ENCODE measurements at regions of chr2 and their contacts with region 1.

Region 1: GRCh38 chr2:106886916-106887758 is 1.2 kb upstream of the ST6GAL2 start:
- DNase-seq: peak; percentile 70 to 87
- ATAC-seq: peak; percentile 58
- H3K4me3 ChIP-seq: peak overlapping the region; percentile 75 to 96
- H3K27ac ChIP-seq: peak overlapping the region; percentile 52 to 89
- H3K4me1 ChIP-seq: peaks cover 1 to 2% of the 10 kb centered on the region in 2 donors
- H3K27me3 ChIP-seq: no peaks in the 10 kb centered on the region

Region 2: DNA sequence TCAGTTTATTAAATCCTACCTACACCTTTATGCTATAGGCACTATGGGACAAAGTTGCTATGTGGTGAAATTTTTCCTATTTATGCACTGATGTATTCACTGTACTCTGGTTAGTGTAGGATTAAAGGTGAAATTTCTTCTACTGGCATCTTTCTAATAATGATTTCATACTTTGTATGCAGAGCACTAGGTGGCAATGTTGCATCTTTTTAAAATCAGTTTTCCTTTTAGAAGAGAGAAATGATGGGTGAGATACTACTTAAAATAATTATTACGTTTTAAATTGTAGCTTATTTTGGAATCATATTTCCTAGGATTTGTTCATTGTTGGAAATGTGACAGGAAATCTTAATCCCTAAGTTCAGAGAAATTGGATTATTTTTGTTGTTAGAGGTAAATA is 249.1 kb before region 1 on chr2:
- intact Hi-C with region 1: loop called (anchors 5 to 10 kb)
- DNase-seq: no peak
- ATAC-seq: no peak
- H3K4me3 ChIP-seq: no peak overlapping the region
- H3K27ac ChIP-seq: no peak overlapping the region
- H3K4me1 ChIP-seq: peaks cover 0 to 2% of the 10 kb centered on the region in 2 donors
- H3K27me3 ChIP-seq: no peaks in the 10 kb centered on the region

Region 3: GRCh38 chr2:106812383-106812782 is 74.8 kb before region 1 on chr2:
- intact Hi-C with region 1: loop called in 1 of 2 experiments (anchors 5 kb)
- DNase-seq: peak in 1 of 2 donors; percentile 63
- ATAC-seq: peak; percentile 76
- H3K4me3 ChIP-seq: no peak overlapping the region
- H3K27ac ChIP-seq: peak overlapping the region; percentile 65 to 78
- H3K4me1 ChIP-seq: peaks cover 4 to 13% of the 10 kb centered on the region in 2 donors
- H3K27me3 ChIP-seq: no peaks in the 10 kb centered on the region

Region 4: GRCh38 chr2:106851087-106851874 is 35.9 kb before region 1 on chr2:
- intact Hi-C with region 1: loop called in 1 of 2 experiments (anchors 5 kb)
- DNase-seq: no peak
- ATAC-seq: peak; percentile 70
- H3K4me3 ChIP-seq: peak overlapping the region in 1 of 2 donors; percentile 69
- H3K27ac ChIP-seq: peak overlapping the region; percentile 80 to 93
- H3K4me1 ChIP-seq: peaks cover 6 to 18% of the 10 kb centered on the region in 2 donors
- H3K27me3 ChIP-seq: no peaks in the 10 kb centered on the region

Region 5: DNA sequence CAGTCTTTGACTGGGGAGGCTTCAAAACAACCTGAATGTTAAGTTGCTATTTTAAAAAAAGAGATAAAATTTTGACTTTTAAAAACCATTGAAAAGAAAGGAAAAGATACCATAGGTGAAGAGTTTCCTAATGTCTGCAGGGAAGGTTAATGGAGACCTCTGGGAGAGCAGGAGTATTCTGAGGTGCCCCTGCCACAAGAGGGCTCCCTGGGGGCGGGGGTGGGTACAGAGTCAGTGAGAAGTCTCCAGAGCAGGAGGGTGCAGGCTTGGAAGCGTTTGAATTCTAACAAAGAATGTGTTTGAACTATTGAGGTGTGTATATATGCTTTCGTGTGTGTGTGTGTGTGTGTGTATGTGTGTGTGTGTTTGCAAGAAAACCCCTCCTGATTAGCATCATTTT is 45.5 kb after region 1 on chr2:
- intact Hi-C with region 1: no loop called
- DNase-seq: no peak
- ATAC-seq: no peak
- H3K4me3 ChIP-seq: no peak overlapping the region
- H3K27ac ChIP-seq: no peak overlapping the region
- H3K4me1 ChIP-seq: no peaks in the 10 kb centered on the region
- H3K27me3 ChIP-seq: no peaks in the 10 kb centered on the region

Region 6: DNA sequence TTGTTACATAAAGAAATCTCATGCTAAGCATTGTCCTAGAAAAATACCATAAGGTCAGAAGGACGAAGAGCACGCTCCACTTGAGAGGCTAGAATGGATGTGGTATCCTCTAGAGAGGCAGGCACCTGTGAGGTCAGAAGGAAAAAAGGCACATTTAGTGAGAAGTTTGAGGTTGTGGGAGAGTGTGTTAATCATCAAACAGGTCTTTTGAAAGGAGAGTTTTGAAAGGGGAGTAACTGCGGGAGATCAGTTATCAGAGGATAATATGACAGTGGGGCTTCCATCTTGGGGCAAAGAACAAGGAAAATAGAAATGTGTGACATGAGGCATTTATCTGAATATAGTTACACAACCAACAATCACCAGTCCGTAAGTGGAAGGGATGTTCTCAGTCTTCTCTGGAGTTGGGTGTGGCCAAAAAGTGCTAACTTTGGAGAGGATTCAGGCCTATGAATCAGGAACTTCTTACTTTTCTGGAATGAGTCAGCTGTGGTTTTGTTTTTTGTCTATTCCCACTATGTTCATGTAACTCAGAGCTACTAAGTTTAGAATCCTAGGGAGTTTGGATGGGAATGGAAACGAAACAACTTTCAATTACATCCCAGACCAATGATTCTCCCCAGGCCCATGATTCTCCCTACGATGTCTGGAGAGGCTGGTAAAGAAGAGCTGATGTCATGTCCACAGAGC is 450.2 kb after region 1 on chr2:
- intact Hi-C with region 1: loop called in 1 of 2 experiments (anchors 10 kb)
- DNase-seq: no peak
- ATAC-seq: peak; percentile 84
- H3K4me3 ChIP-seq: no peak overlapping the region
- H3K27ac ChIP-seq: peak overlapping the region in 1 of 2 donors; percentile 84
- H3K4me1 ChIP-seq: peaks cover 3% of the 10 kb centered on the region in 2 donors
- H3K27me3 ChIP-seq: no peaks in the 10 kb centered on the region

Measured in aorta (tissue), 5 donors.